IMR-90 (cell line): ENCODE measurements at regions of chr7 and their contacts with region 1.

Region 1: GRCh38 chr7:30800785-30801252 is 29.6 kb downstream of the MINDY4 start:
- DNase-seq: peak; percentile 81
- ATAC-seq: peak; percentile 25
- H3K4me3 ChIP-seq: no peak overlapping the region
- H3K27ac ChIP-seq: no peak overlapping the region; the same call in 1 of the 2 replicates
- H3K4me1 ChIP-seq: peaks cover 48% of the 10 kb centered on the region
- H3K27me3 ChIP-seq: peaks cover 2% of the 10 kb centered on the region; the same call in 1 of the 2 replicates
- CTCF ChIP-seq: peak; percentile 93
- POLR2A ChIP-seq: 0 out of 2 replicates have a peak, but pooled peaks have one; percentile 27
- RAD21 ChIP-seq: peak; percentile 96

Region 2: DNA sequence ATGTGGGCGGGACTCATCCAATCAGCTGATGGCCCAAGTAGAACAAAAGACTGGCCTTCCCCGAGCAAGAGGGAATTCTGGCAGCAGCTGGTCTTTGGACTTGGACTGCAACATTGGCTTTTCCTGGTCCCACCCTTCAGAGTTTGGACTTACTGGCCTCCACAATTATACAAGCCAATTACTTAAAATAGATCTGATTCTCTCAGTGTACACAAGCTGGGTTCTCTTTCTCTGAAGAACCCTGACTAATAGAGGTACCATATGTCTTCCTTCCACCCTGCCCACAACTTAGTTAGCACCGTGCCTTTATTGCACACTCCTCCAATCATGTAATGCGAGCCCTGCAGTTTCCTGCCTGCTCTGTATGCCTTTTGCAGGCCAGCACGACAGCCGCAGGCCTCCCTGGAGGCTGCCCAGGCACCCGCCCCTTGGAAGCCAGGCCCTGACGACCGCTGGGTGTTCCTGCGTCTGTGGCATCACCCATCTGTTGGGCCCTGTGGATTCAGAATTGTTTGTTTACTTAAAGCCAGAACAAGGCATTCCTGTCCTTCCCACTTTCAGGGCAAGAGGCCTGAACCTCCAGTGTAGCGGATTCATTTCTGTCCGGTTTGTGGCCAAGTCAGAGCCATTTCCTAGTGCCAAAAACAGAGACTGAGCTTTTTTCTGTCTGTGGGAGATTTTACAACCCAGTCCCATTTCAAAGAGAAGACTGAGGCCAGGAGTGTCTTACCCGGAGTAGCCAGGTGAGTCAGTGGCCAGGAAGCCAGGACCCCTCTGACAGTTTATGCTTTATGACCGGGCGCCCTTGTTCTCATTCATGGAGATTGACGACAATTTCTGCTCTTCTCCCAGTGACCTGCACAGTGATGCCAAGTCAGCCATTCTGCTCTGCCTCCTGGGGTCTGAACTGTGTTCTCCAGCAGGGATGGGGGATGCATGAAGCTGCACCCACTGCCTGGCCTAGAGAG is 49.9 kb before region 1 on chr7:
- CTCF ChIA-PET with region 1: interaction called, 3 read pairs
- POLR2A ChIA-PET with region 1: interaction called, 3 read pairs
- dilution Hi-C with region 1: no loop called
- in situ Hi-C with region 1: no loop called
- intact Hi-C with region 1: loop called (anchors 2 kb)
- DNase-seq: peak; percentile 92
- ATAC-seq: peak; percentile 90
- H3K4me3 ChIP-seq: no peak overlapping the region
- H3K27ac ChIP-seq: peak overlapping the region; percentile 93
- H3K4me1 ChIP-seq: peaks cover 29% of the 10 kb centered on the region
- H3K27me3 ChIP-seq: no peaks in the 10 kb centered on the region
- CTCF ChIP-seq: no peak
- POLR2A ChIP-seq: no peak
- RAD21 ChIP-seq: no peak

Region 3: DNA sequence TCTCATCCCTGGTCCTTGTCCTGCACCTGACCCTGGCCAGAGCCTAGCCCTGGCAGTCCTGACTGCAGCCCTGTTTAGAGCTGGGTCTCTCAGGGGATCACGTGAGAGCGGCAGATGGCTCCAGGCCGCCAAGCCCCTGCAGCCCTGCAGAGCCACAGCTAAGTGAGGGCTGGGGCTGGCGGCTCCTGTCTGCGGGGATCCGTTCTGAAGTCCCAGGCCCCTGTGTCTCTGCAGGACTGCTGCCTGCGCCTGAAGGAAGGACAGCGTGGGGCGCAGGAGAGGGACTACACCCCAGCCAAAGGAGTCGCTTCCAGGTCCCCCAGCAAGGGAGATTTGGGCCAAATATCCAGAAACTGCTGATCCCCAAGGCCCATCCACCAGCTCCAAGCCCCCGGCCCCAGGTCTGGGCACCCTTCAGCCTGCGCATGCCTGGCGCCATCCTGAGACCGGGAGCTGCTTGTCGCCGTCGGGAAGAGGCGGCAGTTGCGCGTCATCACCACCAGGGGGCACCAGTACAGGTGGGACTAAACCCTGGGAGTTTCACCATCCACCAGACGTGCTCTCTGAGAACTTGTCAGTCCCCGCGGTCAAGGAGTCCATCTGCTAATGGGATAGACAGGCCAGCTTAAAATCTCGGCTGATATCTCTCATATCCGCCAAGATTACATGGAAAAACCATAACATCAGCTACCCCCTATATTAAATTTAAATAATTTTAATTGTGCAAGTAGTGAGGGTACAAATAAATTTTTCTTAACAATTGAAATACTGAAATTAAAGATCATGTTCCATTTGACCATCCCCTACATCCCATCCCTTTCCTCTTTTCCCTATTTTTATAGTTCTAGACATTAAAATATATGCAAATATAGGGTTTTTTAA is 137.9 kb after region 1 on chr7:
- CTCF ChIA-PET with region 1: interaction called, 3 read pairs
- POLR2A ChIA-PET with region 1: no interaction called
- dilution Hi-C with region 1: no loop called
- in situ Hi-C with region 1: no loop called
- intact Hi-C with region 1: loop called (anchors 2 kb)
- DNase-seq: peak; percentile 58
- ATAC-seq: peak; percentile 98
- H3K4me3 ChIP-seq: no peak overlapping the region
- H3K27ac ChIP-seq: no peak overlapping the region
- H3K4me1 ChIP-seq: no peaks in the 10 kb centered on the region
- H3K27me3 ChIP-seq: peaks cover 21% of the 10 kb centered on the region
- CTCF ChIP-seq: peak; percentile 84
- POLR2A ChIP-seq: no peak
- RAD21 ChIP-seq: peak; percentile 38; the same call in 1 of the 2 replicates

Region 4: GRCh38 chr7:31122649-31123058 is 321.8 kb after region 1 on chr7:
- CTCF ChIA-PET with region 1: interaction called, 12 read pairs
- POLR2A ChIA-PET with region 1: no interaction called
- dilution Hi-C with region 1: no loop called
- in situ Hi-C with region 1: loop called (anchors 5 kb)
- intact Hi-C with region 1: loop called (anchors 1 kb)
- DNase-seq: peak; percentile 90
- ATAC-seq: peak; percentile 94
- H3K4me3 ChIP-seq: no peak overlapping the region
- H3K27ac ChIP-seq: no peak overlapping the region
- H3K4me1 ChIP-seq: no peaks in the 10 kb centered on the region; the same call in 1 of the 2 replicates
- H3K27me3 ChIP-seq: no peaks in the 10 kb centered on the region; the same call in 1 of the 2 replicates
- CTCF ChIP-seq: peak; percentile 86
- POLR2A ChIP-seq: no peak
- RAD21 ChIP-seq: peak; percentile 84

Region 5: GRCh38 chr7:31633894-31634494 is 833.2 kb after region 1 on chr7:
- CTCF ChIA-PET with region 1: no interaction called
- POLR2A ChIA-PET with region 1: no interaction called
- dilution Hi-C with region 1: no loop called
- in situ Hi-C with region 1: no loop called
- intact Hi-C with region 1: loop called (anchors 10 kb)
- DNase-seq: peak; percentile 39
- ATAC-seq: peak; percentile 77
- H3K4me3 ChIP-seq: no peak overlapping the region
- H3K27ac ChIP-seq: no peak overlapping the region
- H3K4me1 ChIP-seq: no peaks in the 10 kb centered on the region
- H3K27me3 ChIP-seq: no peaks in the 10 kb centered on the region
- CTCF ChIP-seq: peak; percentile 54
- POLR2A ChIP-seq: no peak
- RAD21 ChIP-seq: peak; percentile 58

Region 6: GRCh38 chr7:32204361-32205018 is 1403.7 kb after region 1 on chr7:
- CTCF ChIA-PET with region 1: no interaction called
- POLR2A ChIA-PET with region 1: no interaction called
- dilution Hi-C with region 1: no loop called
- in situ Hi-C with region 1: no loop called
- intact Hi-C with region 1: loop called (anchors 10 kb)
- DNase-seq: peak; percentile 77
- ATAC-seq: peak; percentile 96
- H3K4me3 ChIP-seq: no peak overlapping the region
- H3K27ac ChIP-seq: no peak overlapping the region
- H3K4me1 ChIP-seq: no peaks in the 10 kb centered on the region
- H3K27me3 ChIP-seq: peaks cover 5% of the 10 kb centered on the region
- CTCF ChIP-seq: peak; percentile 81
- POLR2A ChIP-seq: 0 out of 2 replicates have a peak, but pooled peaks have one; percentile 31
- RAD21 ChIP-seq: peak; percentile 92